Common myeloid progenitor, CD34-positive (primary cell): ENCODE measurements at regions of chr10 and their contacts with region 1.

Region 1: GRCh38 chr10:133124357-133125211 is 35.4 kb upstream of the KNDC1 start:
- DNase-seq: peak in 2 of 3 donors; percentile 31 to 38
- H3K4me3 ChIP-seq: no peak overlapping the region
- H3K27ac ChIP-seq: no peak overlapping the region
- H3K4me1 ChIP-seq: peaks cover 0 to 19% (median 16%) of the 10 kb centered on the region in 4 experiments
- H3K27me3 ChIP-seq: peaks cover 0 to 57% (median 9%) of the 10 kb centered on the region in 5 experiments

Region 2: GRCh38 chr10:132939957-132940790 is 184.4 kb before region 1 on chr10:
- CTCF ChIA-PET with region 1: interaction called, 12 read pairs
- POLR2A ChIA-PET with region 1: no interaction called
- DNase-seq: peak; percentile 61 to 79 (median 77)
- H3K4me3 ChIP-seq: no peak overlapping the region
- H3K27ac ChIP-seq: no peak overlapping the region
- H3K4me1 ChIP-seq: peaks cover 0 to 17% (median 6%) of the 10 kb centered on the region in 4 experiments
- H3K27me3 ChIP-seq: peaks cover 0 to 71% (median 26%) of the 10 kb centered on the region in 5 experiments

Region 3: DNA sequence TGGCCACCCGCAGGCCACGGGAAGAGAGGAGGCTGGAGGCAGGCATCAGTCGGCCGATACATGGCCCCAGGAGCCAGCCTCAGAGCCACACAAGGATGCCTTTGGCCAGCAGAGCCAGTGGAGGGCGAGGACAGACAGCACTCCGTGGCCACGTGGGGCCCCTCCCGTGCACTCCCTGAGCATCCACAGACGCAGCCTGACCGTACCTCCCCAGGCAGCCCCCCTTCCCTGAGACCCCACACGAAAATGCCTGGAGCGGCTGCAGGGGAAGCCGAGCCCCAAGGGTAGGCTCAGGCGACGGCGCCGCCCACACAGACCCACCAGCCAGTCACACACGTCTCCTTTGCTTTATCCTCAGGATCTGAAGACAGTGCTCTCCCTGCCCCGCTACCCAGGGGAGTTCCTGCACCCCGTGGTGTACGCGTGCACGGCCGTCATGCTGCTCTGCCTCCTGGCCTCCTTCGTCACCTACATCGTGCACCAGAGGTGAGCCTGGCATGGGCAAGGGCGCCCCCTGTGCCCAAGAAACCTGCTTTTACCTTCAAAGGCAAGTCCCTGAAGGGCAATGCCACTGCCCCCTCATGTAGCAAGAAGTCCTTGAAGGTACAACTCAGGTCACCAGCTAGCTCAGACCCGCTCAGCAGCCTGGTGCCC is 27.8 kb before region 1 on chr10:
- CTCF ChIA-PET with region 1: no interaction called
- POLR2A ChIA-PET with region 1: no interaction called
- DNase-seq: peak in 2 of 3 donors; percentile 9 to 40
- H3K4me3 ChIP-seq: no peak overlapping the region
- H3K27ac ChIP-seq: no peak overlapping the region
- H3K4me1 ChIP-seq: peaks cover 0 to 7% (median 3%) of the 10 kb centered on the region in 4 experiments
- H3K27me3 ChIP-seq: peaks cover 0 to 61% (median 10%) of the 10 kb centered on the region in 5 experiments